ENCODE measurements at regions of chr12 and their contacts with region 1.

Region 1: GRCh38 chr12:57111031-57111734 is at the start of gene STAT6:
- DNase-seq: peak; percentile 67 to 96 (median 85)
- ATAC-seq: peak; percentile 60
- H3K4me3 ChIP-seq: peak within 1 kb of the TSS; percentile 88 to 100
- H3K4me3 Mint-ChIP-seq: peak within 1 kb of the TSS; percentile 91
- H3K27ac ChIP-seq: peak within 1 kb of the TSS; percentile 87 to 98
- H3K27ac Mint-ChIP-seq: peak within 1 kb of the TSS; percentile 94
- H3K4me1 ChIP-seq: peaks cover 24% of the 10 kb centered on the region
- H3K4me1 Mint-ChIP-seq: peaks cover 52% of the 10 kb centered on the region
- H3K27me3 ChIP-seq: no peaks in the 10 kb centered on the region
- H3K27me3 Mint-ChIP-seq: no peaks in the 10 kb centered on the region
- CTCF ChIP-seq: no peak
- total RNA-seq, gene STAT6: 116 to 127 TPM

Region 2: GRCh38 chr12:56688129-56688845 is 422.9 kb before region 1 on chr12 and contains the start of gene PTGES3:
- CTCF ChIA-PET with region 1: no interaction called
- POLR2A ChIA-PET with region 1: no interaction called
- intact Hi-C with region 1: loop called in 1 of 2 experiments (anchors 1 kb)
- DNase-seq: peak; percentile 94 to 99 (median 97)
- ATAC-seq: peak; percentile 69
- H3K4me3 ChIP-seq: peak within 1 kb of the TSS; percentile 75 to 99
- H3K4me3 Mint-ChIP-seq: peak within 1 kb of the TSS; percentile 98
- H3K27ac ChIP-seq: peak within 1 kb of the TSS; percentile 97 to 98
- H3K27ac Mint-ChIP-seq: peak within 1 kb of the TSS; percentile 99
- H3K4me1 ChIP-seq: peaks cover 35% of the 10 kb centered on the region
- H3K4me1 Mint-ChIP-seq: peaks cover 34% of the 10 kb centered on the region
- H3K27me3 ChIP-seq: no peaks in the 10 kb centered on the region
- H3K27me3 Mint-ChIP-seq: no peaks in the 10 kb centered on the region
- CTCF ChIP-seq: no peak
- total RNA-seq, gene PTGES3: 148 to 154 TPM

Region 3: GRCh38 chr12:56931474-56931978 is 179.7 kb before region 1 on chr12:
- CTCF ChIA-PET with region 1: no interaction called
- POLR2A ChIA-PET with region 1: no interaction called
- intact Hi-C with region 1: no loop called
- DNase-seq: peak in 2 of 9 experiments; percentile 24 to 54
- ATAC-seq: no peak
- H3K4me3 ChIP-seq: no peak overlapping the region
- H3K4me3 Mint-ChIP-seq: no peak overlapping the region
- H3K27ac ChIP-seq: no peak overlapping the region
- H3K27ac Mint-ChIP-seq: no peak overlapping the region
- H3K4me1 ChIP-seq: no peaks in the 10 kb centered on the region
- H3K4me1 Mint-ChIP-seq: peaks cover 6% of the 10 kb centered on the region
- H3K27me3 ChIP-seq: no peaks in the 10 kb centered on the region
- H3K27me3 Mint-ChIP-seq: peaks cover 4% of the 10 kb centered on the region
- CTCF ChIP-seq: no peak

Region 4: GRCh38 chr12:57005980-57006808 is 105.0 kb before region 1 on chr12 and contains the start of gene ZBTB39:
- CTCF ChIA-PET with region 1: interaction called, 43 read pairs
- POLR2A ChIA-PET with region 1: interaction called, 8 read pairs
- intact Hi-C with region 1: loop called (anchors 1 kb)
- DNase-seq: peak; percentile 49 to 84 (median 67)
- ATAC-seq: peak; percentile 88
- H3K4me3 ChIP-seq: peak within 1 kb of the TSS; percentile 66 to 70
- H3K4me3 Mint-ChIP-seq: peak within 1 kb of the TSS; percentile 97
- H3K27ac ChIP-seq: peak within 1 kb of the TSS; percentile 39 to 64
- H3K27ac Mint-ChIP-seq: peak within 1 kb of the TSS; percentile 92
- H3K4me1 ChIP-seq: peaks cover 36% of the 10 kb centered on the region
- H3K4me1 Mint-ChIP-seq: peaks cover 52% of the 10 kb centered on the region
- H3K27me3 ChIP-seq: no peaks in the 10 kb centered on the region
- H3K27me3 Mint-ChIP-seq: no peaks in the 10 kb centered on the region
- CTCF ChIP-seq: peak; percentile 43
- total RNA-seq, gene ZBTB39: 9.9 to 11.3 TPM

Region 5: DNA sequence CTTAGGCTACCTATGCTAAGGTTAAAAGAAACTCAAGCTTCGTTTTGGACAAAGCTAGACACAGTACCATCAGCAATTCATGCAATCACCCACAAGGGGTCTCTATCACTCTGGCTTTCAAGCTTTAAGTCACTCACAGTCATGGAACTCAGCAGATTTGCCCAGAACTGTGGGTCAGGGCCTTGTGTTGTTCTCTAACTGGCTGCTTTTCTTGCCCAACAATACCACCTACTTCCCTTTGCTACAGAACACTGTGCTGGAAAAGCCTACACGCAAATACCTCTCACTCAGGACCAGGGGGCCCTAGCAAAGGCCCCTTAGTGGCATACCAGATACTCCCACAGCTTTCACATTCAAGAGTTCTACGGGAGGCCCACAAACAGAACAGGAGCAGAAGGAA is 41.7 kb before region 1 on chr12:
- CTCF ChIA-PET with region 1: interaction called, 547 read pairs
- POLR2A ChIA-PET with region 1: interaction called, 105 read pairs
- intact Hi-C with region 1: loop called (anchors 1 kb)
- DNase-seq: peak in 8 of 9 experiments; percentile 28 to 88 (median 61)
- ATAC-seq: peak; percentile 99
- H3K4me3 ChIP-seq: no peak overlapping the region
- H3K4me3 Mint-ChIP-seq: peak overlapping the region; percentile 16
- H3K27ac ChIP-seq: peak overlapping the region in 1 of 2 experiments; percentile 28
- H3K27ac Mint-ChIP-seq: peak overlapping the region; percentile 70
- H3K4me1 ChIP-seq: peaks cover 18% of the 10 kb centered on the region
- H3K4me1 Mint-ChIP-seq: peaks cover 23% of the 10 kb centered on the region
- H3K27me3 ChIP-seq: no peaks in the 10 kb centered on the region
- H3K27me3 Mint-ChIP-seq: no peaks in the 10 kb centered on the region
- CTCF ChIP-seq: peak; percentile 86

Region 6: DNA sequence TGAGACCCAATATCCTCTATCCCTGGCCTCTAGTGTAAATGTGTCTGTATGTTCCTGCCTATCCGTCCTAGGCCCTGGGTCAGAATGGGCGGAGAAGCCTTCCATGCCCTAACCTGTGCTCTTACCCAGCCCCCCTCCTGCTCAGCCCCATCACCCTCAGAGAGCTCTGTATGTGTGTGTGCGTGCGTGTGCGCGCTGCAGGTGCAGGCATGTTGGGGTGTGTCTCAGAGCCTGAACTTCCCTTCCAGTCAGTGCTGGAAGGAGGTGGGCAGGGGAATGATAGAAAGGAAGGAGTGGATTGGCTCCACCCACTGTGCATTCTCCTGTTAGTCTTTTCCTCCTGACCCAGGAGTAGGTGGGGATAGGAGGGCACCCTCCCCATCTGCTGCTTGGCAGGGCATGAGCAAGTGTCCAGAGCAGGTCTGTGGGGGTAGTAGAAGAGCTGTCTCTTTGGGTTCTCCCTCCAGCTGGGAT is 15.0 kb before region 1 on chr12:
- CTCF ChIA-PET with region 1: interaction called, 116 read pairs
- POLR2A ChIA-PET with region 1: interaction called, 244 read pairs
- intact Hi-C with region 1: no loop called
- DNase-seq: no peak
- ATAC-seq: no peak
- H3K4me3 ChIP-seq: no peak overlapping the region
- H3K4me3 Mint-ChIP-seq: no peak overlapping the region
- H3K27ac ChIP-seq: no peak overlapping the region
- H3K27ac Mint-ChIP-seq: peak overlapping the region; percentile 69
- H3K4me1 ChIP-seq: peaks cover 36% of the 10 kb centered on the region
- H3K4me1 Mint-ChIP-seq: peaks cover 57% of the 10 kb centered on the region
- H3K27me3 ChIP-seq: no peaks in the 10 kb centered on the region
- H3K27me3 Mint-ChIP-seq: no peaks in the 10 kb centered on the region
- CTCF ChIP-seq: no peak

Region 7: DNA sequence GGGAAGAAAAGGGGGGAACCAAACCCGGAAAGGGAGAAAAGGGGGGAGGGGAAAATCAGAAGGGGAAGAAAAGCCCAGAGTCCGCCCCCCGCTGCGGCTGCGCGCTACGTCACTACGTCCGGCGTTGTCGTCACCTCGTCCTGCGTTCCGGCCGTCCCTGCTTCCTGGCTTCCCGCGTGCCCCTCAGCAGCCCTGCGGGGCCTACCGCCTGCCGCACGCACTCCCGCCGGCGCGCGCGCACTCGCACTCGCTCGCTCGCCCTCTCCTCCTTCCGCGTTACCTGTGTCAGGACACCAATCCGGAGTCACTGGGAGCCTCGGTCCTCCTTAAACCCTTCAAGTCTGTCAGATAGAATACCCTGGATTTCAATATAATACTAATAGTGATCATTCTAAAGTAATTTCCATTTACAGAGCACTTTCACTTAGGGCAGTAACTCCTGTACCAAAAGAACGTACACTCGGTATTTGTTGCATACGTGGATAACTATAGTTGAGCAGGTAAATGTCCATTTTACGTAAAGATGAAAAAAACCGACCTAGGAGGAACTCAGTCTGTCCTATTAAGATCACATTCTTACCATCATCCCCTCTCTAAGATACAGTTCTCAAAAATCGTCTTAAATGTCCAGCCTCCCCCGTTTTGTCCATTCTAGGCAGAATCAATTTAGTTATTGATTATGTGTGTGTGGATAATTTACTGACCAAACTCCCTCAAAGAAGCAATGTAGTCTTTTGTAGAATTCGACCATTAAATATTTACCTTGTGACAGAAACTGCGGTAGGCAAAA is 319.9 kb after region 1 on chr12 and contains the start of gene R3HDM2:
- CTCF ChIA-PET with region 1: no interaction called
- POLR2A ChIA-PET with region 1: no interaction called
- intact Hi-C with region 1: loop called in 1 of 2 experiments (anchors 5 kb)
- DNase-seq: peak; percentile 91 to 98 (median 96)
- ATAC-seq: peak; percentile 91
- H3K4me3 ChIP-seq: peak within 1 kb of the TSS; percentile 51 to 59
- H3K4me3 Mint-ChIP-seq: peak within 1 kb of the TSS; percentile 98
- H3K27ac ChIP-seq: peak within 1 kb of the TSS; percentile 87 to 96
- H3K27ac Mint-ChIP-seq: peak within 1 kb of the TSS; percentile 100
- H3K4me1 ChIP-seq: peaks cover 26% of the 10 kb centered on the region
- H3K4me1 Mint-ChIP-seq: peaks cover 45% of the 10 kb centered on the region
- H3K27me3 ChIP-seq: no peaks in the 10 kb centered on the region
- H3K27me3 Mint-ChIP-seq: no peaks in the 10 kb centered on the region
- CTCF ChIP-seq: no peak
- total RNA-seq, gene R3HDM2: 93.2 to 103 TPM